ENCODE measurements at regions of chr9 and their contacts with region 1.

Region 1: GRCh38 chr9:19782005-19782404 is 6.8 kb downstream of the SLC24A2 start:
- DNase-seq: no peak
- ATAC-seq: peak in 1 of 8 donors; percentile 44
- H3K4me3 ChIP-seq: no peak overlapping the region
- H3K27ac ChIP-seq: no peak overlapping the region
- H3K4me1 ChIP-seq: no peaks in the 10 kb centered on the region
- H3K27me3 ChIP-seq: peaks cover 0 to 25% (median 4%) of the 10 kb centered on the region in 7 donors
- CTCF ChIP-seq: no peak

Region 2: GRCh38 chr9:19840953-19841352 is 58.9 kb after region 1 on chr9:
- intact Hi-C with region 1: loop called in 1 of 10 experiments (anchors 5 kb)
- DNase-seq: no peak
- ATAC-seq: no peak
- H3K4me3 ChIP-seq: no peak overlapping the region
- H3K27ac ChIP-seq: no peak overlapping the region
- H3K4me1 ChIP-seq: no peaks in the 10 kb centered on the region
- H3K27me3 ChIP-seq: no peaks in the 10 kb centered on the region
- CTCF ChIP-seq: no peak

Region 3: DNA sequence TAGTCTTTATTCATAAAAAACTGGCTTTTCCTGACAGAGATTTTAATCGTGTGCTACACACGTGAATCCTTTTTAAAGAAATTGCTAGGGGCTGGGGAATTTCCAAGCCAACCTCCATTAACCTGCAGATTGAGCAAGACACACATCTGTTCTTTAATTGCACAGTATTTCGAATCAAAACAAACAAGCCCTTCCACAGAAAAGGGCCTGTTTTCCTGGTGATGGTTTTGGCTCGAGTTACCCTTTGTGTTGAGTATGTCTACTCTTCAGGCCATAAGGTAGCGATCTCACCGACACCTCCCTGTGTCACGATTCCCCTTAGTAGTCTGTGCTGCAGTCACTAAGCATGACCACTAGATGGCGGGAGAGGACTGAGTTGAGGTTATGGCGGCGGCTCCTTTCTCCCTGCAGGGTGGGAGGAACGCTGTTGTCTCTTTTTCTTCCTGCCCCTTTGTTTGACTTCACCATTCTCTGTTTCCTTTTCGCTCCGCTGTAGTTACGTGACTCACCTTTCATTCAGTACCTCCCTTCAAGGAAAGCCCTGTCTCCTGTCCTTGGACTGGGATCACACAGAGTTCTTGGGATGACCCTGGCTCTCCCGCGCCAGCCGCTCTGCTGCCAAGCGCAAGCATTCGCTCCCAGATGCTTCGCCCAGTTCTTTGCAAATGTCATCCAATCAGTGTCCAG is 144.0 kb after region 1 on chr9:
- intact Hi-C with region 1: no loop called
- DNase-seq: peak; percentile 35 to 72
- ATAC-seq: peak; percentile 84 to 96 (median 94)
- H3K4me3 ChIP-seq: peak overlapping the region in 9 of 10 donors; percentile 2 to 51 (median 45)
- H3K27ac ChIP-seq: no peak overlapping the region
- H3K4me1 ChIP-seq: peaks cover 0 to 11% (median 6%) of the 10 kb centered on the region in 9 donors
- H3K27me3 ChIP-seq: peaks cover 0 to 12% (median 0%) of the 10 kb centered on the region in 7 donors
- CTCF ChIP-seq: peak; percentile 92 to 99 (median 97)